CD4-positive, alpha-beta T cell (primary cell): ENCODE measurements at regions of chr2 and their contacts with region 1.

Region 1: GRCh38 chr2:108927936-108928659 is 60.9 kb downstream of the EDAR start:
- DNase-seq: peak in 13 of 14 experiments; percentile 8 to 72 (median 32)
- ATAC-seq: peak; percentile 73
- H3K4me3 ChIP-seq: no peak overlapping the region
- H3K4me3 Mint-ChIP-seq: no peak overlapping the region
- H3K27ac ChIP-seq: no peak overlapping the region
- H3K27ac Mint-ChIP-seq: no peak overlapping the region
- H3K4me1 ChIP-seq: peaks cover 6% of the 10 kb centered on the region
- H3K4me1 Mint-ChIP-seq: peaks cover 13% of the 10 kb centered on the region
- H3K27me3 ChIP-seq: no peaks in the 10 kb centered on the region
- H3K27me3 Mint-ChIP-seq: no peaks in the 10 kb centered on the region
- CTCF ChIP-seq: peak; percentile 82

Region 2: GRCh38 chr2:108855194-108855593 is 72.9 kb before region 1 on chr2:
- CTCF ChIA-PET with region 1: no interaction called
- POLR2A ChIA-PET with region 1: no interaction called
- intact Hi-C with region 1: loop called in 1 of 2 experiments (anchors 1 kb)
- DNase-seq: peak in 3 of 14 experiments; percentile 50 to 54 (median 51)
- ATAC-seq: peak; percentile 82
- H3K4me3 ChIP-seq: no peak overlapping the region
- H3K4me3 Mint-ChIP-seq: no peak overlapping the region
- H3K27ac ChIP-seq: no peak overlapping the region
- H3K27ac Mint-ChIP-seq: no peak overlapping the region
- H3K4me1 ChIP-seq: no peaks in the 10 kb centered on the region
- H3K4me1 Mint-ChIP-seq: peaks cover 3% of the 10 kb centered on the region
- H3K27me3 ChIP-seq: no peaks in the 10 kb centered on the region
- H3K27me3 Mint-ChIP-seq: no peaks in the 10 kb centered on the region
- CTCF ChIP-seq: peak; percentile 64